Activated naive CD4-positive, alpha-beta T cell treated with anti-CD3 and anti-CD28 coated beads for 36 hours (primary cell): ENCODE measurements at regions of chr10 and their contacts with region 1.

Region 1: GRCh38 chr10:28179006-28179742 is 123.7 kb downstream of the MPP7 start:
- DNase-seq: peak; percentile 58
- H3K4me3 Mint-ChIP-seq: no peak overlapping the region
- H3K27ac Mint-ChIP-seq: peak overlapping the region; percentile 81
- H3K4me1 Mint-ChIP-seq: peaks cover 44% of the 10 kb centered on the region
- H3K27me3 Mint-ChIP-seq: no peaks in the 10 kb centered on the region

Region 2: GRCh38 chr10:27504007-27504807 is 675.0 kb before region 1 on chr10 and contains the start of gene RAB18:
- CTCF ChIA-PET with region 1: no interaction called
- intact Hi-C with region 1: loop called (anchors 5 kb)
- DNase-seq: peak; percentile 99
- H3K4me3 Mint-ChIP-seq: peak within 1 kb of the TSS; percentile 99
- H3K27ac Mint-ChIP-seq: peak within 1 kb of the TSS; percentile 92
- H3K4me1 Mint-ChIP-seq: peaks cover 41% of the 10 kb centered on the region
- H3K27me3 Mint-ChIP-seq: no peaks in the 10 kb centered on the region
- total RNA-seq, gene RAB18: 35.4 to 41.3 TPM

Region 3: DNA sequence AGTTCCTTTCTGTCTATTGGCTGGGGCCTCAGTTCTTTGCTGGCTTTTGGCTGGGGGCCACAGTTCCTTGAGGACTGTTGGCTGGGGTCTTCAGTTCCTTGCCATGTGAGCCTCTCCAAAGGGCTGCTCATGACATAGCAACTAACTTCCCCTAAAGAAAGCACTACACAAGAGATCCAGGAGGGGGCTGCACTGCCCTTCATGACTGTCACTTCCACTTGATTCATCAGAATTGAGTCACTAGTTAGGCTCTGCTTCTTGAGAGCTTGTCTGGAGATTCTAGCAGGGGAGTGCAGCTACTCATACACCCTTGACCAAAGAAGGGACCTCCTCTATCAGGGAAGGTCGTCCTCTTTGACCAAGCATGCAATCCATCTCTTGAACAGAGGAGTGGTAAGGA is 395.5 kb before region 1 on chr10:
- CTCF ChIA-PET with region 1: no interaction called
- intact Hi-C with region 1: loop called (anchors 1 kb)
- DNase-seq: peak; percentile 57
- H3K4me3 Mint-ChIP-seq: no peak overlapping the region
- H3K27ac Mint-ChIP-seq: no peak overlapping the region
- H3K4me1 Mint-ChIP-seq: no peaks in the 10 kb centered on the region
- H3K27me3 Mint-ChIP-seq: peaks cover 8% of the 10 kb centered on the region

Region 4: DNA sequence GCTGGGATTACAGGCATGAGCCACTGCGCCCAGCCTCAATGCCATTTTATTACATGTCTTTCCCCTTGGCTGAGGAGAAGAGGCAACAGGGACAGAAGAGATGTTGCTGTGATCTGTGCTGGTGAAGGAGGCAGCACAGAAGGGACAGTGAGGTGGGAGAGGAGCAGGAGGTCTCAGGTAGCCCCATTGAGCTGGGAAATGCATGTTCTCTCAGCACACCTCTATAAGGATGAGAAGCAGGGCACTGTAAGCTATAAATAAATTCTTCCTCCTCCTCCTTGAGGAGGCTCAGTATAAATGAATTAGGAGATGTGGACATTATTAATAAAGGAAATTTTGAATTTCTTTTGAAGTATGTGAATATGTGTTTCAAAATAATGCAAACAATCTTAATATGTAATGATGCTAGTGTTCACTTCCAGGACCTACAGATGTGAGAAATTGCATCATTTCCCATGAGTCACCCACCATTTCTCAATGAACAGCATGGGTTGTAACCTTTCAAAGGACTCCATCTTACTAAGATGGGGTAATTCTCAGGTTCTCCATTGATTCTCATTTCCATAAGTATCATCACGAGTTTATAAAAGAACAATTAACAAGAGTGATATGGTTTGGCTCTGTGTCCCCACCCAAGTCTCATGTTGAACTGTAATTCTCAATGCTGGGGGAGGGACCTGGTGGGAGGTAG is 91.4 kb before region 1 on chr10:
- CTCF ChIA-PET with region 1: interaction called, 4 read pairs
- intact Hi-C with region 1: loop called (anchors 2 kb)
- DNase-seq: peak; percentile 51
- H3K4me3 Mint-ChIP-seq: no peak overlapping the region
- H3K27ac Mint-ChIP-seq: peak overlapping the region; percentile 85
- H3K4me1 Mint-ChIP-seq: peaks cover 16% of the 10 kb centered on the region
- H3K27me3 Mint-ChIP-seq: no peaks in the 10 kb centered on the region

Region 5: DNA sequence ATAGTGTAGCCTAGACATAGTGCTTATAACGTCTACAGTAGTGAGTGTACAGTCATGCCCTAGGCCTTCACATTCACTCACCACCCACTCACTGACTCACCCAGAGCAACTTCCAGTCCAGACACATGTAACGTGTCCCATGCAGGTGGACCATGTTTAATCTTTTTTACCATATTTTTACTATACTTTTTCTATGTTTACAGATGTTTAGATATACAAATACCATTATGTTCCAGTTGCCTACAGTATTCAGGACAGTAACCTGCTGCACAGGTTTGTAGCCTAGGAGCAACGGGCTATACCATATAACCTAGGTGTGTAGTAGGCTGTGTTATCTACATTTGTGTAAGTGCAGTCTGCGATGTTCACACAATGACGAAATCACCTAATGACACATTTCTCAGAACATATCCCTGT is 112.7 kb after region 1 on chr10:
- CTCF ChIA-PET with region 1: no interaction called
- intact Hi-C with region 1: loop called (anchors 2 kb)
- DNase-seq: peak; percentile 84
- H3K4me3 Mint-ChIP-seq: no peak overlapping the region
- H3K27ac Mint-ChIP-seq: peak overlapping the region; percentile 89
- H3K4me1 Mint-ChIP-seq: peaks cover 73% of the 10 kb centered on the region
- H3K27me3 Mint-ChIP-seq: no peaks in the 10 kb centered on the region